PC-3 (cell line): ENCODE measurements at regions of chr14 and their contacts with region 1.

Region 1: GRCh38 chr14:75864352-75864751 is 117.4 kb downstream of the TGFB3 start:
- DNase-seq: peak; percentile 97
- ATAC-seq: peak; percentile 78
- H3K4me3 ChIP-seq: no peak overlapping the region
- H3K27ac ChIP-seq: peak overlapping the region; percentile 99
- H3K4me1 ChIP-seq: peaks cover 81% of the 10 kb centered on the region
- H3K27me3 ChIP-seq: no peaks in the 10 kb centered on the region
- CTCF ChIP-seq: no peak

Region 2: DNA sequence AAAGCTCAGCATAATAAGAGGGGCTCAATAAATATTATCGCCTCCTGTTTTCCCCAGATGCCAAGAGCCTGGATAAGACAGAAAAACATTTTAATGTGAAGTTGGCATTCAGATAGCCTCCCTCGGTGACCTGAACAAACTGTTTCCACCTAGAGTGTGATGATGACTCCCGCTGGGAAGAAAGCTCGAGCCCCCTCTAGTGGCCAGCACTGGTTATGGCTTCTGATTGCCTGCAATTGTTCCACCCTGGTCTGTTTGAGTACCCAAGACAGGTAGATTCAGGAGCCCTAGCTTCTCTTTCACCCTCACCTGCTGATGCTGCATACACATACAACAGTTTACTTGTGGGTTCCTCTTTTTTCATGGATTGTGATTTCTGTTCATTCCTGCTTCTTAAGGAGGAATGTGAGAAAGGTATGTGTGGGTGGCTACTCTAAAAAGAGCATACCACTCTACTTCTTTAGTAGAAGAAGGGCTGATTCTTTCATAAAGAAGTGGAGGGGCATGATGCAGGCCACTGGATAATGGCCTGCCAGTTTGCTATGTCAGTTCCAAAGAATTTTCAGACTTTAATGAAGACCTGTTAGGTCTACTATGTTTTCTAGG is 210.1 kb before region 1 on chr14:
- CTCF ChIA-PET with region 1: no interaction called
- POLR2A ChIA-PET with region 1: no interaction called
- intact Hi-C with region 1: no loop called
- DNase-seq: peak; percentile 87
- ATAC-seq: peak; percentile 95
- H3K4me3 ChIP-seq: no peak overlapping the region
- H3K27ac ChIP-seq: no peak overlapping the region
- H3K4me1 ChIP-seq: peaks cover 12% of the 10 kb centered on the region
- H3K27me3 ChIP-seq: no peaks in the 10 kb centered on the region
- CTCF ChIP-seq: peak; percentile 96

Region 3: DNA sequence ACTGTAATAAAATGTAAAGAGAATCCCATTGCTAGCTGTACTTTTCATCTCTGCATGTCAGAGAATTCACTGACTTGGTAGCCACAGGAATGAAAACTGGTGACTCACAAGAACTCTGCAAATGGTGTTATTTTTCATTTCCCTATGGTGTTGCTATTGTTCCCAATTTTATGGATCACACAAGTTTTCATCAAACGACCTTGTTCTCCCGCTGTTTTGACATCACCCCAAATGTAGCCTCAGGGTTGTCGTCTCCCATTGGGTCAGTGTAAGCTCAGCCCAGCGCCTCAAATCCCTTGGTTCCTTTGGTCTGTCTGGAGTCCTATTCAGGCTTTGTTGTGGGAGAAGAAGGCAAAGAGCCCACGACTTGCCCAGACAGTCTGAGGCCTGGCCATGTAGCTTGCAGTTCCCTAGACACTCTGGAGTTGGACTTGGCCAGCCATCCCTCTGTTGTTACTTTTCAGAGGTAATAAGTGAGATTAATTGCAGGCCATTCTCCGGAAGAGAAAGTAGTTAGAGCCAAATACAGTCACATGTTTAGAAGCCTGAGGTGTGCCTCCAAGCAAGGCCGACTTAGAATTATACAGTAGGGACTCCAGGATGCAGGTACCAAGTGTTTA is 41.7 kb before region 1 on chr14:
- CTCF ChIA-PET with region 1: no interaction called
- POLR2A ChIA-PET with region 1: interaction called, 5 read pairs
- intact Hi-C with region 1: loop called (anchors 2 kb)
- DNase-seq: peak; percentile 81
- ATAC-seq: peak; percentile 80
- H3K4me3 ChIP-seq: no peak overlapping the region; the same call in 1 of the 2 replicates
- H3K27ac ChIP-seq: peak overlapping the region; percentile 97
- H3K4me1 ChIP-seq: peaks cover 52% of the 10 kb centered on the region
- H3K27me3 ChIP-seq: no peaks in the 10 kb centered on the region
- CTCF ChIP-seq: no peak

Region 4: GRCh38 chr14:75831458-75831857 is 32.9 kb before region 1 on chr14:
- CTCF ChIA-PET with region 1: interaction called, 4 read pairs
- POLR2A ChIA-PET with region 1: interaction called, 4 read pairs
- intact Hi-C with region 1: loop called (anchors 1 kb)
- DNase-seq: peak; percentile 87
- ATAC-seq: peak; percentile 62
- H3K4me3 ChIP-seq: peak overlapping the region; percentile 63
- H3K27ac ChIP-seq: peak overlapping the region; percentile 99
- H3K4me1 ChIP-seq: peaks cover 56% of the 10 kb centered on the region
- H3K27me3 ChIP-seq: no peaks in the 10 kb centered on the region
- CTCF ChIP-seq: no peak

Region 5: DNA sequence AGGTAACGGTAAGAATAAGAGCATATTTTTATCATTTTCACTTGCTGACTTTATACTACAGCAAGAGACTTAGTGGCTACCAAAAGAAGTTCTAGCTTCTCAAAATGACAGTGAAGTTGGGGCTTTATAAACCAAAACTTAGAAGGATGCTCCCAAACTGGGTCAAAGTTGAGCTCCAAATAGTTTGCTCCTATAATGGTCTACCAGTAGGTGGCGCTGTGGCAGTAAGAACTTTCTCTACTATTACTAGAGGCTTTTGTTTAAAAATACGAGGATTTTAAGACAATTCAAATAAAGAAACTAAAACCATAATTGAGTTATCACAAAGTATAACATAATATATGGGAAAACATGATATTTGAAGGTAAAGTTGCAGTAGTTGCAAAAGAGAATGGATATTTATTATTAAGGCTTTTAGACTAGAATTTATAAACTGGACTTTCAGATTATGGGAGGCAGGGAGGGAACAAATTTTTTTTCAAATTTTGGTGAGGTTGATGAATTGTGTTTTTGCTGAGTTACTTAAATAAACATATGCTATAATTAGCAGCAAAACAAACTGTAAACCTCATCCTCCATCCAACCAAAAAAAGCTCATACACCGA is 42.4 kb after region 1 on chr14:
- CTCF ChIA-PET with region 1: no interaction called
- POLR2A ChIA-PET with region 1: no interaction called
- intact Hi-C with region 1: loop called (anchors 5 kb)
- DNase-seq: peak; percentile 72
- ATAC-seq: no peak
- H3K4me3 ChIP-seq: no peak overlapping the region
- H3K27ac ChIP-seq: no peak overlapping the region
- H3K4me1 ChIP-seq: peaks cover 9% of the 10 kb centered on the region; the same call in 1 of the 2 replicates
- H3K27me3 ChIP-seq: no peaks in the 10 kb centered on the region
- CTCF ChIP-seq: peak; percentile 96